Activated CD4-positive, alpha-beta memory T cell treated with anti-CD3 and anti-CD28 coated beads, Interleukin-2, amount 10 ng/mL, durations not matched to agents 7 days and 5 days (primary cell): ENCODE measurements at regions of chr1 and their contacts with region 1.

Region 1: GRCh38 chr1:12067900-12068821 is 5.1 kb downstream of the TNFRSF8 start:
- DNase-seq: peak; percentile 72
- H3K4me3 Mint-ChIP-seq: peak overlapping the region; percentile 74
- H3K27ac Mint-ChIP-seq: peak overlapping the region; percentile 96
- H3K4me1 Mint-ChIP-seq: peaks cover 78% of the 10 kb centered on the region
- H3K27me3 Mint-ChIP-seq: peaks cover 2% of the 10 kb centered on the region

Region 2: DNA sequence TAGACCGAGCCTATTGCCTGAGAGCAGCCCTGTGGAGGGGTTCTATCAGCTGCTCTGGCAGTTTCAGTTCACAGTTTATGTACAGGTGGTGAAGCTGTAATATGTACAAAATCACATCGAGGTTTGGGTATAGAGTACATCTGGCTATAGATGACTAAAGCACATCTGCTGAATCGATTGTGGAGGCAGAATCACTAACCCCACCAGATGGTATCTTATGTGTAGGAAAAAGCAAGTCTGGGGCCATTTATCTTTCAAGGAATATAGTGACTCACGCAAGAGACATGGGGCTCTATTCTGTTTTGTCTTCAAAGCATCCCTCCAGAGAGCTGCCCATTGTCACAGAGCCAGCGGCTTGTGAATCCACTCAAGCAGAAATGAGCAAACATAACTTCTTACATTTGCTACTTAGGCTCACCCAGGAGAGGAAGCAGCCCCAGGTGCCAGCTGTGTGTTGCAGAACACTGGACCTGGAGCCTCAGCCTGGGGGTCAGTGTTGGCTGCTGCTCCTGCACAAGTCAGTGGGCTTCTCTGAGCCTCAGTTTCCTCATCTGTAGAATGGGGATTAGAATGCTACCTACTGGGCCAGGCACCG is 27.6 kb before region 1 on chr1:
- CTCF ChIA-PET with region 1: interaction called, 3 read pairs
- POLR2A ChIA-PET with region 1: interaction called, 23 read pairs
- DNase-seq: no peak
- H3K4me3 Mint-ChIP-seq: no peak overlapping the region
- H3K27ac Mint-ChIP-seq: peak overlapping the region; percentile 69
- H3K4me1 Mint-ChIP-seq: peaks cover 46% of the 10 kb centered on the region
- H3K27me3 Mint-ChIP-seq: peaks cover 1% of the 10 kb centered on the region

Region 3: DNA sequence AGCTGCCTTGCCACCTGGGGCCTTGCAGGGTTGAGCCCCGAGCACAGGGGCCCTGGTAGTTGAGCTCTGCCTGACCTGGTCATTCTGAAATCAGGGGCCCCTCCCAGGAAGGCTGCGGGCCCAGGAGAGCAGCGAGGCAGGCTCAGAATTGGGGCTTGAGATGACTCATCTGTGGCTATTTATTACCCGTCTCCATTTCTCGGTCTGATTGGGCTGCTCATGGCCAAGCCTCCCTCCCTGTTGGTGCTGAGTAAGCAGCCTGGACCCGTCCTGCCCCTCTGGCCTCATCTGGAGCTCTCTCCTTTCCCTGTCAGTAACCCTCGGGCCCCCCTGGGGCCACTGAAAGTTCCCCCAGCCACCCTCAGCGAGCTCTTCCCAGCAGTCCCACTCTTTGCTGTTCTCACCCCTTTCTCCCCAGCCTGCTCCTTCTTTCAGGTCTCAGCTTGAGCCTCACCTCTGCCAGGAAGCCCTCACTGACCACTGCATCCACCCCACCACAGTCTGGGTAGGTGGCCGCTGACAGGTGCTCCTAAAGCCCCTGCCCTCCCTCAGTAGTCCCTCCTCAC is 16.1 kb before region 1 on chr1:
- CTCF ChIA-PET with region 1: interaction called, 12 read pairs
- POLR2A ChIA-PET with region 1: interaction called, 54 read pairs
- DNase-seq: peak; percentile 76
- H3K4me3 Mint-ChIP-seq: peak overlapping the region; percentile 32
- H3K27ac Mint-ChIP-seq: peak overlapping the region; percentile 78
- H3K4me1 Mint-ChIP-seq: peaks cover 62% of the 10 kb centered on the region
- H3K27me3 Mint-ChIP-seq: no peaks in the 10 kb centered on the region

Region 4: DNA sequence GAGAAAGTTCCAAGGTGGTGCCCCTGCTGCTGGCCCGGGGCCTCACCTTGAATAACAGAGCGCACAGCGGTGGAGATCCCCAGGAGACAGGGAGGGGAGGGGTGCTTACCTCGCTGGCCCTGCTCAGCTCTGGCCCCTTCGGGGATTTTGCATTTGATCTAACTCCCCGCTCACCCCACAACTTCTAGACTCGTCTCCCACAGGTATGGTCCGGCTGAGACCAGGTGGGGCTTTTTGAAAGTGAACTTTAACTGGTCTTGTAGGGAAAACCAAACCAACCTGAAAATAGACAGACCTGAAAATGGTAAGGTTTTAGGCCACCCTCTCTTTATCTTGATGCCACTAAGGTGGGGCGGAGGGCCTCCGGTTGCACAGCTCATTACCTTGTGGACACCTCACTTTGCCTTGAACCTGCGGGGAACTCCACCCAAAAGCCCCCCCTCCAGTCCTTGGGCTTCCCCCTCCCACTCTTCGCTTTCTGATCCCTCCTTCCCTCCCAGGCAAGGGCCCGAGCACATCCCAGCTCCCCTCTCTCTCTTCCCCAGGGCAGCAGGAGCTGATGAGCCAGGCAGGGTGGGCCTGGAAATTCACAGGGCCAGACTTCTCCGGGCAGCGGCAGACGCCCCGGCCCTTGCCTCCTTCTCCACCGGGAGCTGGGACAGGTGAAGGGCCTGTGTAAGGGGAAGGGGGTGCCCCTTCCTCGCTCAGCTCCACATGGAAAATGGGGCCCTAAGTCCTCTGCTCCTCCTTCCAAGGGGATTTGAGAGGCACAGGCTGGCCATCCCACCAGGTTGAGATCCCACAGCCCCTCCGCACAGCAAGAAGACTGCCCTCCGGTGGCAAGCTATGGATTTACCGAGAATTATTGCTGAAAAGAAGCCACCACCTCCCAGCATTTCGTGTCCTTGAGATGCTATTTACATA is 11.0 kb after region 1 on chr1:
- CTCF ChIA-PET with region 1: interaction called, 25 read pairs
- POLR2A ChIA-PET with region 1: interaction called, 45 read pairs
- DNase-seq: peak; percentile 66
- H3K4me3 Mint-ChIP-seq: peak overlapping the region; percentile 56
- H3K27ac Mint-ChIP-seq: peak overlapping the region; percentile 79
- H3K4me1 Mint-ChIP-seq: peaks cover 74% of the 10 kb centered on the region
- H3K27me3 Mint-ChIP-seq: no peaks in the 10 kb centered on the region

Region 5: GRCh38 chr1:12087797-12088314 is 19.7 kb after region 1 on chr1:
- CTCF ChIA-PET with region 1: interaction called, 4 read pairs
- POLR2A ChIA-PET with region 1: interaction called, 41 read pairs
- DNase-seq: peak; percentile 75
- H3K4me3 Mint-ChIP-seq: peak overlapping the region; percentile 43
- H3K27ac Mint-ChIP-seq: peak overlapping the region; percentile 91
- H3K4me1 Mint-ChIP-seq: peaks cover 64% of the 10 kb centered on the region
- H3K27me3 Mint-ChIP-seq: no peaks in the 10 kb centered on the region